PC-9 (cell line): ENCODE measurements at regions of chr20 and their contacts with region 1.

Region 1: GRCh38 chr20:33291830-33292355 is 8.9 kb downstream of the BPIFB1 start:
- DNase-seq: peak in 1 of 2 experiments; percentile 61
- H3K4me3 ChIP-seq: no peak overlapping the region
- H3K27ac ChIP-seq: no peak overlapping the region
- H3K4me1 ChIP-seq: no peaks in the 10 kb centered on the region
- H3K27me3 ChIP-seq: no peaks in the 10 kb centered on the region
- CTCF ChIP-seq: peak; percentile 99

Region 2: GRCh38 chr20:33211817-33212424 is 80.0 kb before region 1 on chr20:
- CTCF ChIA-PET with region 1: no interaction called
- POLR2A ChIA-PET with region 1: no interaction called
- intact Hi-C with region 1: loop called (anchors 5 kb)
- DNase-seq: peak; percentile 38 to 74
- H3K4me3 ChIP-seq: no peak overlapping the region
- H3K27ac ChIP-seq: no peak overlapping the region
- H3K4me1 ChIP-seq: no peaks in the 10 kb centered on the region
- H3K27me3 ChIP-seq: peaks cover 23% of the 10 kb centered on the region
- CTCF ChIP-seq: peak; percentile 70

Region 3: GRCh38 chr20:33273117-33273851 is 18.6 kb before region 1 on chr20:
- CTCF ChIA-PET with region 1: no interaction called
- POLR2A ChIA-PET with region 1: no interaction called
- intact Hi-C with region 1: no loop called
- DNase-seq: peak in 1 of 2 experiments; percentile 62
- H3K4me3 ChIP-seq: no peak overlapping the region
- H3K27ac ChIP-seq: no peak overlapping the region
- H3K4me1 ChIP-seq: peaks cover 30% of the 10 kb centered on the region
- H3K27me3 ChIP-seq: no peaks in the 10 kb centered on the region
- CTCF ChIP-seq: no peak